ENCODE measurements at regions of chr12 and their contacts with region 1.

Region 1: DNA sequence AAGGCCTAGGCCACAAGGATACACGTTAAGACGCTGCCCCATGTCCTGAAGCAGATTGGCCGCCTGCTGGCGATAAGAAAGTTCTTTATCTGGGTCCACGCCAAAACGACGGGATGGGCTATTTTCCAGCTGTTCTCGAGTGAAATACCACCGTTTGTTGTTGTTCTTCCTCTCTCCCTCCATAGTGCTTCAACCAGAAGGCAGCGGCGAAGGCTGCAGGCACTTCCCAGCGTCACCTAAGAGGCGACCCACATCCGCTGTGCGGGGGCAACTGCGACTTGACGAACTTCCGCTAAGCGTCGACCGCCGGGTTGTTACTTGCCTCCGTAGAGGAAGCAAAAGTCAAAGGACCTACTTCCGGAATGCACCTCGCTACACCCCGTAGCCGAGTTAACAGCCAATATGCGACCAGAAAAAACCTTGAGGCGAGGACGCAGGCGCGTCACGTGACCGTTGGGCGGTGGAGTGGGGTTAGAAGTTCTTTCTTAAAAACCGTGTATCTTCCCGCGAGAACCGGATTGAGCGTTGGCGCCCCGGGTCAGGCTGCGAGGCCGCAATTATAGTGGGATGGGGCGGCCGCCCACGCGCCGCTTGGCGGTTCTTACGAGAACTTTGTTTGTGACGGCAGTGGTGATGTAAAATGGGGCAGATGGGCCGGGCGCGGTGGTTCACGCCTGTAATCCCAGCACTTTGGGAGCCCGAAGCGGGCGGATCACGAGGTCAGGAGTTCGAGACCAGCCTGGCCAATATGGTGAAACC is at the start of gene CCNT1:
- DNase-seq: peak; percentile 100
- H3K4me3 ChIP-seq: peak within 1 kb of the TSS; percentile 65 to 92 (median 71)
- H3K27ac ChIP-seq: peak within 1 kb of the TSS; percentile 90
- H3K4me1 ChIP-seq: peaks cover 16% of the 10 kb centered on the region
- H3K27me3 ChIP-seq: no peaks in the 10 kb centered on the region
- CTCF ChIP-seq: peak; percentile 10 to 31
- POLR2A ChIP-seq: peak; percentile 61
- total RNA-seq, gene CCNT1: 33.0 and 35.1 TPM in 2 replicates

Region 2: DNA sequence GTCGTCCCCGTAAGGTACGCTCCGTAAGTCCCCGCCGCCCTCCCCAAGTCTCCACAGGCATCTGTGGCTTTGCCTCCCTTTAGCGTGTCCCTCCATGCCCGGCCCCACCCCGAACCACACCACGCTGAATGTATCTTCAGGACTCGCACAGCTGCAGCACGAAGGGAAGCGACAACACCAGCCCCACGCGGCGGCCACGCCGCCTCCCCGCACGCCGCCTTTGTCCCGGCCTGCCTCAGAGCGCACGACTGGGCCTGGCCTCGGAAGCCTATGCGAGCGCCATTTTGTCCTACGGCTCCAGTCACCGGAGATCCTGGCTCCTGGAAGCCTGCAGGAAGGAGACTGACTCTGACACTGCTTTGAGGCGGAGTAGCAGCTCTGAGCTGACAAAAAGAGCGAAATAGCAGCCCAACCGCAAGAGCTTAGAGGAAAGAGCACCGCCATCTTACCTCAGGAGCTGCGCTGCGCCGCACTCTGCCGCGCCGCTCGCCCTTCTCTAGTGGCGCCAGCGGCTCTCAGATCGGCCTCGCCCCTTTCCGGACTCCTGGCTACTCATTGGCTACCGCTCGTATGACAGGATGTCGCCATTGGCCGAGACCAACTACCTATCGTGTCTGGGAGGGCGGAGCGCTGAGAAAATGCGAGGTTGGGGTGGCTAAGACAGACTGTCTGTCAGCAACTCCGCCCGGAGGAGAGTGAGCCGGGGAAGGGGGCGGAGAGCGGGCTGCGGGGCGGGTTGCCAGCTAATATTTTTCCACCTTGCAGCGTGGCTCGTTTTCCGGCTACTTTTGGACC is 34.7 kb before region 1 on chr12 and contains the start of gene KANSL2:
- CTCF ChIA-PET with region 1: no interaction called
- POLR2A ChIA-PET with region 1: interaction called, 3 read pairs
- dilution Hi-C with region 1: no loop called
- intact Hi-C with region 1: loop called (anchors 1 kb)
- DNase-seq: peak; percentile 99
- H3K4me3 ChIP-seq: peak within 1 kb of the TSS; percentile 46 to 94 (median 56)
- H3K27ac ChIP-seq: peak within 1 kb of the TSS; percentile 66
- H3K4me1 ChIP-seq: peaks cover 30% of the 10 kb centered on the region
- H3K27me3 ChIP-seq: no peaks in the 10 kb centered on the region
- CTCF ChIP-seq: peak in 1 of 2 donors; percentile 3
- POLR2A ChIP-seq: peak; percentile 99
- total RNA-seq, gene KANSL2: 35.8 and 40.6 TPM in 2 replicates

Region 3: GRCh38 chr12:48788854-48789796 is 72.5 kb after region 1 on chr12 and contains the start of gene ADCY6:
- CTCF ChIA-PET with region 1: no interaction called
- POLR2A ChIA-PET with region 1: no interaction called
- dilution Hi-C with region 1: no loop called
- intact Hi-C with region 1: loop called (anchors 2 kb)
- DNase-seq: peak; percentile 79
- H3K4me3 ChIP-seq: peak within 1 kb of the TSS; percentile 58 to 90 (median 84)
- H3K27ac ChIP-seq: peak within 1 kb of the TSS; percentile 50
- H3K4me1 ChIP-seq: peaks cover 10% of the 10 kb centered on the region
- H3K27me3 ChIP-seq: no peaks in the 10 kb centered on the region
- CTCF ChIP-seq: no peak
- POLR2A ChIP-seq: no peak
- total RNA-seq, gene ADCY6: 43.3 and 46.2 TPM in 2 replicates